ENCODE measurements at regions of chr7 and their contacts with region 1.

Region 1: GRCh38 chr7:1059200-1060091 is 15.1 kb downstream of the GPR146 start:
- DNase-seq: peak in 1 of 9 donors; percentile 44
- ATAC-seq: peak; percentile 41
- H3K4me3 ChIP-seq: no peak overlapping the region
- H3K4me3 Mint-ChIP-seq: peak overlapping the region in 3 of 10 donors; percentile 14 to 73 (median 17)
- H3K27ac ChIP-seq: no peak overlapping the region
- H3K27ac Mint-ChIP-seq: peak overlapping the region in 3 of 9 donors; percentile 12 to 63 (median 39)
- H3K4me1 ChIP-seq: peaks cover 0 to 17% of the 10 kb centered on the region in 2 donors
- H3K4me1 Mint-ChIP-seq: peaks cover 16 to 52% (median 25%) of the 10 kb centered on the region in 7 donors
- H3K27me3 ChIP-seq: no peaks in the 10 kb centered on the region
- H3K27me3 Mint-ChIP-seq: peaks cover 0 to 3% (median 0%) of the 10 kb centered on the region in 5 donors

Region 2: GRCh38 chr7:1028031-1028770 is 31.2 kb before region 1 on chr7:
- CTCF ChIA-PET with region 1: no interaction called
- POLR2A ChIA-PET with region 1: interaction called, 17 read pairs
- intact Hi-C with region 1: loop called in 1 of 2 experiments (anchors 1 kb)
- DNase-seq: peak; percentile 50 to 94 (median 81)
- ATAC-seq: peak; percentile 83
- H3K4me3 ChIP-seq: peak overlapping the region; percentile 64
- H3K4me3 Mint-ChIP-seq: peak overlapping the region; percentile 72 to 90 (median 80)
- H3K27ac ChIP-seq: peak overlapping the region; percentile 80
- H3K27ac Mint-ChIP-seq: peak overlapping the region in 7 of 9 donors; percentile 56 to 92 (median 86)
- H3K4me1 ChIP-seq: peaks cover 20% of the 10 kb centered on the region in 2 donors
- H3K4me1 Mint-ChIP-seq: peaks cover 25 to 59% (median 44%) of the 10 kb centered on the region in 7 donors
- H3K27me3 ChIP-seq: no peaks in the 10 kb centered on the region
- H3K27me3 Mint-ChIP-seq: no peaks in the 10 kb centered on the region

Measured in naive thymus-derived CD4-positive, alpha-beta T cell (primary cell).